Ascending aorta (tissue), 2 donors: ENCODE measurements at regions of chr15 and their contacts with region 1.

Region 1: GRCh38 chr15:88657326-88658069 is 18.7 kb downstream of the ISG20 start:
- DNase-seq: no peak
- H3K4me3 ChIP-seq: no peak overlapping the region
- H3K27ac ChIP-seq: no peak overlapping the region
- H3K4me1 ChIP-seq: peaks cover 4 to 28% of the 10 kb centered on the region in 2 donors
- H3K27me3 ChIP-seq: no peaks in the 10 kb centered on the region
- CTCF ChIP-seq: peak; percentile 80 to 89 (median 82)

Region 2: DNA sequence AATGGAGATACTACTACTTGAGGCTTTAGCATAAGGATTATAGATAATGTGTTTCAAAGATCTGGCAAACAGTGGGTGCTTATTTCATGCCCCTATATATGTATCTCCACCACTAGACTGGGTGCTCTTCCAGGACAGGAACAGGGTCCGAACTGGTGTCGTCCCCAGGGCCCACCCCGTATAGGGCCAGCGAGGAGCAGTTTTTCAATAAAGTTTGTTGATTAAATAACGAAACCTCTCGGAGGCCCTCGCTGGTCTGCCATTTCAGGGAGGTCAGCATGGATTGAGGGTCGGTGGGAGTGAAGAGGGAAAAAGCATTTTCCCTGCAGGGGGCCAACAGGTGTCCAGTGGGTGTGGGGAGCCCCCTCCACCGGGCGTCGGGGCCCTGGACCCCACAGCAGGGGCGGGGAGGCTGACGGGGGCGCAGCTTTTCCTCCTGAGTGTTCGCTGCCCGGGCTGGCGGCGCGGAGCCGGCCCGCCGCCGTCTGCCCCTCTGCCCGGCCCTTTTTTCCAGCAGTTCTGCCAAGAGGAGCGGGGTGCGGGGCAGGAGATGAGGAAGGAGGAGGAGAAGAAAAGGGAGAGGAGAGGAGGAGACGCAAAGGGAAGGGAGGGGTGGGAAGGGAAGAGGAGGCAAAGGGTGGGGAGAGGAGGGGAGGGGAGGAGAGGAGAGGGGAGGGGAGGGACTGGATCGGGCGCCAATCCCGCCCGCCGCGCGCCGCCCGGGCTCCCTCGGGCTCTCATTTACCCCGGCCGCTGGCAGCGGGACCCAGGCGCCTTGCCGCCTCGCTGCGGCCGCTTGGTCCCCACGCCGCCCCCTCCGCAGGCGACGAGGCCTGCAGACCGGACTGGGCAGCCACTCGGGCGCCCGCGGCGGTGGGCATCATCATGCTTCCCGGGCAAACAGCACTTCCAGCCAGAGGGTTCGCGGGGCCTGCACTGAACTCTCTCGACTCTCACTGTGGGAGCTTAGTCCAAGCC is 47.6 kb after region 1 on chr15:
- intact Hi-C with region 1: loop called (anchors 1 kb)
- DNase-seq: peak; percentile 29 to 92
- H3K4me3 ChIP-seq: peak overlapping the region; percentile 59 to 64
- H3K27ac ChIP-seq: peak overlapping the region; percentile 81 to 91
- H3K4me1 ChIP-seq: peaks cover 3 to 26% of the 10 kb centered on the region in 2 donors
- H3K27me3 ChIP-seq: no peaks in the 10 kb centered on the region
- CTCF ChIP-seq: no peak

Region 3: DNA sequence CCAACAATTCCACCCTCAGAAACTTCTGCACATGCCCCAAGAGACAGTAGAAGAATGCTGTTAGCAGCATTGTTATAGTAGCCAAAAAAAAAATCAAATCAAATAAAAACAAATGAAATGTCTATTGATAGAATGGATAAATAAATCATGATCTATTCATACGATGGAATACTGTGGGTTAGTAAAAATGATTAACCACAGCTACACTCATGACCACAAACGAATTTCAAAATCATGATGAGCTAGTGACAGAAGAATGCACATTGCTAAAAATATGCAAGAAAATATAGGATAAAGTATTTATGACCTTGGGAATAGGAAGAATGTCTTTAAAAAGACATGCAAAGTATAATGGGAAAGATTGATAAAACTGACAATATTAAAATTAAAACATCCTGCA is 88.2 kb after region 1 on chr15:
- intact Hi-C with region 1: loop called (anchors 5 kb)
- DNase-seq: no peak
- H3K4me3 ChIP-seq: no peak overlapping the region
- H3K27ac ChIP-seq: peak overlapping the region; percentile 70 to 85
- H3K4me1 ChIP-seq: peaks cover 4 to 48% of the 10 kb centered on the region in 2 donors
- H3K27me3 ChIP-seq: no peaks in the 10 kb centered on the region
- CTCF ChIP-seq: no peak

Region 4: GRCh38 chr15:88803241-88803919 is 145.9 kb after region 1 on chr15 and contains the start of gene ACAN:
- intact Hi-C with region 1: no loop called
- DNase-seq: peak in 1 of 2 donors; percentile 65
- H3K4me3 ChIP-seq: peak within 1 kb of the TSS; percentile 60 to 87
- H3K27ac ChIP-seq: peak within 1 kb of the TSS; percentile 58 to 68
- H3K4me1 ChIP-seq: peaks cover 3 to 6% of the 10 kb centered on the region in 2 donors
- H3K27me3 ChIP-seq: no peaks in the 10 kb centered on the region
- CTCF ChIP-seq: no peak
- total RNA-seq, gene ACAN: 113 TPM

Region 5: DNA sequence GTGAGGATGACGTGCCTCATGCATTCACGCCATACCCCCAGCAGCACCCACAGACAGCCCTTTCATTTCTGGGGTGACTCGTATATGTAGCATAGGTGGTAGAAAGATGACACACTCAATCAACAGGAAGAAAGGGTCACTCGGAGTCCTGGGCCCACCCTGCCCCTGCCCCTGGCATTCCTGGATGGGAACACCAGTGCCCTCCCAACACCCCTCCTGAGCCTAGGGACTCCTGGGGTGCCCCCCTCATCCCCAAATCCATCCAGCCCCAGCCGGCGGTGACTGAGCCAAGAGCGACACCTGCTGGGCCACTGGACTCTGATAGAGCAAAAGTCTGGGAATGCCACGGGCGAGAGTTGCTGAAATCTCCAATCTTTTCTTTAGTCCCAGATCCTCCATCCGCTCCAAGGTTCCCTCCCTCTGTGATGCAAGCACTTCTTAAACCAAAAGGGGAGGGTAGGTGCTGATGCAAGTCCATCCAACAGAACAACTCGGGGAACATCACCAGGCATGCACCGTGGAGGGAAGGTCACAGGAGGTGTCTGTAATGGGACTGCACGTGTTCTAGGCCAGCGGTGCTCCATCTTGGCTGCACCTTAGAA is 176.8 kb after region 1 on chr15:
- intact Hi-C with region 1: loop called (anchors 1 kb)
- DNase-seq: peak; percentile 15 to 85
- H3K4me3 ChIP-seq: no peak overlapping the region
- H3K27ac ChIP-seq: peak overlapping the region; percentile 74 to 82
- H3K4me1 ChIP-seq: peaks cover 0 to 16% of the 10 kb centered on the region in 2 donors
- H3K27me3 ChIP-seq: no peaks in the 10 kb centered on the region
- CTCF ChIP-seq: peak; percentile 79 to 90 (median 88)

Region 6: DNA sequence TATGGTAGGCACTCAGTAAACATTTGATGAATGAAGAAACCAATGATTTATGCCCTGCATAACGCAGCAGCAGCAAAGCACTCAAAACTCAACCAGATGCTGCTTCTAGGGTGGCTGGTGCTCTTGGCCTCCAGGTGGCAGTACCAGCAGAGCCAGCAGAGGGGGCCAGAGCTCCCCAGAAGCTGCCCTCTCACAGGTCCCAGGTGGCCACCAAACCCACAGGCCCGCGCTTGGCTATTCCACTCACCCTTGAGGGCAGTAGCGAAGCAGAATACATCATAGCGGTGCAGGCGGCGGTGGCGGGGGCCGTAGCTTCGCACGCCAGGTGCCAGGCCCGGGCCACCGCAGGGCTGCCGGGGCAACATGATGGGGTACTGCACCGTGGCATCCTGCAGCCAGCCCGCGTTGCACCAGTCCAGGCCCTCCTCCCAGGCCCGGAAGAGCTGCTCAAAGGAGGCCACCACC is 221.3 kb after region 1 on chr15:
- intact Hi-C with region 1: loop called (anchors 5 kb)
- DNase-seq: no peak
- H3K4me3 ChIP-seq: no peak overlapping the region
- H3K27ac ChIP-seq: no peak overlapping the region
- H3K4me1 ChIP-seq: peaks cover 0 to 10% of the 10 kb centered on the region in 2 donors
- H3K27me3 ChIP-seq: no peaks in the 10 kb centered on the region
- CTCF ChIP-seq: peak; percentile 23 to 56 (median 29)

Region 7: GRCh38 chr15:89017370-89018066 is 360.0 kb after region 1 on chr15:
- intact Hi-C with region 1: loop called (anchors 10 kb)
- DNase-seq: peak; percentile 55 to 96
- H3K4me3 ChIP-seq: peak overlapping the region; percentile 36 to 40
- H3K27ac ChIP-seq: peak overlapping the region; percentile 95 to 96
- H3K4me1 ChIP-seq: peaks cover 22 to 51% of the 10 kb centered on the region in 2 donors
- H3K27me3 ChIP-seq: no peaks in the 10 kb centered on the region
- CTCF ChIP-seq: peak; percentile 76 to 82 (median 79)

Region 8: GRCh38 chr15:89177633-89178306 is 520.3 kb after region 1 on chr15:
- intact Hi-C with region 1: loop called (anchors 10 kb)
- DNase-seq: peak in 1 of 2 donors; percentile 81
- H3K4me3 ChIP-seq: no peak overlapping the region
- H3K27ac ChIP-seq: peak overlapping the region in 1 of 2 donors; percentile 2
- H3K4me1 ChIP-seq: peaks cover 0 to 17% of the 10 kb centered on the region in 2 donors
- H3K27me3 ChIP-seq: no peaks in the 10 kb centered on the region
- CTCF ChIP-seq: peak; percentile 76 to 88 (median 77)